AG04449 (cell line): ENCODE measurements at regions of chr1 and their contacts with region 1.

Region 1: GRCh38 chr1:39189592-39190041 is 14.9 kb upstream of the MACF1 start:
- DNase-seq: no peak
- H3K4me3 ChIP-seq: no peak overlapping the region
- CTCF ChIP-seq: no peak

Region 2: GRCh38 chr1:38758820-38759219 is 430.8 kb before region 1 on chr1:
- CTCF ChIA-PET with region 1: no interaction called
- POLR2A ChIA-PET with region 1: no interaction called
- DNase-seq: no peak
- H3K4me3 ChIP-seq: no peak overlapping the region
- CTCF ChIP-seq: no peak

Region 3: GRCh38 chr1:39110325-39110851 is 79.2 kb before region 1 on chr1:
- CTCF ChIA-PET with region 1: interaction called, 75 read pairs
- POLR2A ChIA-PET with region 1: interaction called, 11 read pairs
- DNase-seq: peak; percentile 69
- H3K4me3 ChIP-seq: no peak overlapping the region; the same call in 1 of the 2 replicates
- CTCF ChIP-seq: no peak

Region 4: GRCh38 chr1:39142401-39143151 is 47.0 kb before region 1 on chr1:
- CTCF ChIA-PET with region 1: interaction called, 23 read pairs
- POLR2A ChIA-PET with region 1: interaction called, 3 read pairs
- DNase-seq: no peak
- H3K4me3 ChIP-seq: no peak overlapping the region
- CTCF ChIP-seq: no peak

Region 5: DNA sequence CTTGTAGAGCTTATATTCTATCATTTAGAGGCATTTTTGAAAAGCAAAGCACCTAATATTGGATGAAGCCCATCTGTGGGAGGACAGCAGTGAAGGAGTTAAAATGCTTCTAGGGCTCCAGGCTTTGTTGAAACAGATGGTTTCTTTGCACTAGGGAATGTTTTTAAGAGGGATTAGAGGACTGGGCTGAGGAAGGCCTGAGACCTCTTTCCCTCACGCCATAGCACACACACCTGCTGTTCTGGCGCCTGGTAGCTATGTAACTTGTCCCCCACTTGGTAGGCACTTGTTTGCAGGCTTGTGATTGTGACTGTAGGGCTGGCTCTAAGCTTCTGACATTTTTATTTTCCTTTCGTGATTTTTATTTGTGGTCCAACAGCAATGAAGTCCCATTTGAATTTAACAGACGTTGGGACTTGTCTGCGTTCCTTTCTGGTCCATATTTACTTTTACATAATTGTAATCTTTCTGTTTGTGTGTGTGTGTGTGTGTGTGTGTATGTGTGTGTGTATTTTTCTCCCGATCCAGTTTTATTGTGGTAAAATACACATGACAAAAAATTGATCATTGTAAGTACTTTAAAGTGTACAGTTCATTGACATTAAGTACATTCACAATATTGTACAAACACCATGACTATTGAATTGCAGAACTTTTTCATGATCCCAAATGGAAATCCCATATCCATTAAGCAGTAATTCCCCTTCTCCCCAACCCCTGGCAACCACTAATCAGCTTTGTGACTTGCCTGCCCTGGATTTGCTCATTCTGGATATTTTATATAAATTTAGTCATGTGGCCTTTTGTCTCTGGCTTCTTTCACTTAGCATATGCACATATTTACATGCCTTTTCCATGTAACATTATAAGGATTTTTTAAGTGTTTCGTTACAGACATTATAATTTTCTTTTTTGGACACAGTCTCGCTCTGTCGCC is 18.6 kb before region 1 on chr1:
- CTCF ChIA-PET with region 1: interaction called, 31 read pairs
- POLR2A ChIA-PET with region 1: interaction called, 5 read pairs
- DNase-seq: no peak
- H3K4me3 ChIP-seq: no peak overlapping the region
- CTCF ChIP-seq: no peak

Region 6: GRCh38 chr1:39177682-39178081 is 11.9 kb before region 1 on chr1:
- CTCF ChIA-PET with region 1: interaction called, 55 read pairs
- POLR2A ChIA-PET with region 1: interaction called, 5 read pairs
- DNase-seq: no peak
- H3K4me3 ChIP-seq: no peak overlapping the region
- CTCF ChIP-seq: no peak